Activated CD4-positive, alpha-beta memory T cell treated with anti-CD3 and anti-CD28 coated beads for 36 hours (primary cell): ENCODE measurements at regions of chr12 and their contacts with region 1.

Region 1: DNA sequence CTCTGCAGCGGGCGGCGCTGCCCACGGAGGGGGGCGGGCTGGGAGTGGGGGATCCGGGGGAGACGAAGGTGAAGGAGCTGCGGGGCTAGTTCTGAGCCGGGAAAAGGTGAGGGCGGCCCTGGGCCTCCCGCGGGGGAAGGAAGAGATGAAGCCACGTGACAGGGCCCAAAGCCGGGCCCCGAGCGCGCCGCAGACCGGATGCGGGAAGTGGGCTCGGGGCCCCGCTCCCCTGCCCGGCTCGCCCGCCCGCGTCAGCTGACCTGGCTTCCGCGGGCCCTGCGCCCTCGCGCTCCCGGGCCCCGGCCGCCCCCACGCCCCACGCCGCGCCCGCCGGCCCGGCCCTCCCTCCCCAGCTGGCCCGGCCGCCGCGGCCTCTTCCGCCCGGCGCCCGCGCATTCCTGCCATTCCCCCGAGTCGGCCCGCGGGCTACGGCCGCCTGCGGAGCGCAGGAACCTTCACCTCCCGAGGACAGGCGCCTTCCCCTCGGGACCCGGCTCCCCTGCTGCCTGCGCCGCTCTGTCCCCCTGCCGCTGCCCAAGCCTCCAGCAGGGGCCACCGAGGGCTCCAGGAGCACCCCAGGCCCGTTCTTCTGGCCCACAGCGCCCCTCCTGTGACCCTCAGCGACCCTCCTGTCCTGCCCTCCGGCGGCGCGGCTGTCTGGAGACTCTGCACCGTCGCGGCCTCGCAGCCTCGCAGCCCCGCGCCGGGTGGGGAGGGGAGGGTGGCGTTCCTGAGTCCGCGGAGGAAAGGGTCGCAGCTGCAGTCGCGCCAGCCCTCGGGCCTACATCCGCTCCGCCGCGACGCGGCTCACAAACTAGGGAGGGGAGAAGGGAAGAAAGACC is 20.4 kb downstream of the NINJ2 start:
- DNase-seq: peak; percentile 86
- H3K4me3 Mint-ChIP-seq: peak overlapping the region; percentile 74
- H3K27ac Mint-ChIP-seq: peak overlapping the region; percentile 96
- H3K4me1 Mint-ChIP-seq: peaks cover 57% of the 10 kb centered on the region
- H3K27me3 Mint-ChIP-seq: no peaks in the 10 kb centered on the region

Region 2: DNA sequence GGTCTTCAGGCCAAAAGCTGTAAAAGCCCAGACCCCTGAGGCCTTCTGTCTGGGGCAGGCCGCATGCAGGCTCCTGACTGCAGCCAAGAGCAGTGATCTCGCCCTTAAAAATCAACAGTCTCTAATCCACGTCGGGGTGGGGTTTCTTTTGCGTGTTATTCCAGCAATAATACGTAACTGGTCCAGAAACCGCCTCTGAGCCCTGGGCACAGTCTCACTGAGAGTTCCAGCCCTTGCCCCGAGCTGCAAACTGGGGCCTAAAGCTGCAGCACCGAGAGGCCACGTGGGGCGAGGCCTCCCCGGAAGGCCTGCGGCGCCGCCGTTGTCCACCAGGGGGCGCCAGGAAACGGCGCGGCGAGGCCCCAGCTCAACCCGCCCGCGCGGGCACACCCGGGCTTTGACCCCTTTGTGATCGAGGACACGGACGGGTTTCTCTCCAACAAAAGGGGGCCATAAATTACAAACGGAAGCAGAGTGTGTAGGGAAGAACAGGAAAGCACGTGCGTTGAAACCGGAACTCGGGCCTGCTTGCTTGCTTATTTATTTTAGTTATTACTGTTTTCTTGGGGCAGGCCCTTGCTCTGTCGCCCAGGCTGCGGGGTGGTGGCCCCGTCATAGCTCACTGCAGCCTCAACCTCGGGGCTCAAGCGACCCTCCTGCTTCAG is 66.8 kb before region 1 on chr12:
- CTCF ChIA-PET with region 1: interaction called, 13 read pairs
- POLR2A ChIA-PET with region 1: no interaction called
- intact Hi-C with region 1: loop called (anchors 2 kb)
- DNase-seq: peak; percentile 88
- H3K4me3 Mint-ChIP-seq: peak overlapping the region; percentile 51
- H3K27ac Mint-ChIP-seq: peak overlapping the region; percentile 45
- H3K4me1 Mint-ChIP-seq: peaks cover 34% of the 10 kb centered on the region
- H3K27me3 Mint-ChIP-seq: no peaks in the 10 kb centered on the region

Region 3: GRCh38 chr12:622416-622815 is 20.4 kb before region 1 on chr12:
- CTCF ChIA-PET with region 1: interaction called, 3 read pairs
- POLR2A ChIA-PET with region 1: no interaction called
- intact Hi-C with region 1: loop called (anchors 1 kb)
- DNase-seq: peak; percentile 40
- H3K4me3 Mint-ChIP-seq: peak overlapping the region; percentile 45
- H3K27ac Mint-ChIP-seq: peak overlapping the region; percentile 86
- H3K4me1 Mint-ChIP-seq: peaks cover 30% of the 10 kb centered on the region
- H3K27me3 Mint-ChIP-seq: no peaks in the 10 kb centered on the region

Region 4: DNA sequence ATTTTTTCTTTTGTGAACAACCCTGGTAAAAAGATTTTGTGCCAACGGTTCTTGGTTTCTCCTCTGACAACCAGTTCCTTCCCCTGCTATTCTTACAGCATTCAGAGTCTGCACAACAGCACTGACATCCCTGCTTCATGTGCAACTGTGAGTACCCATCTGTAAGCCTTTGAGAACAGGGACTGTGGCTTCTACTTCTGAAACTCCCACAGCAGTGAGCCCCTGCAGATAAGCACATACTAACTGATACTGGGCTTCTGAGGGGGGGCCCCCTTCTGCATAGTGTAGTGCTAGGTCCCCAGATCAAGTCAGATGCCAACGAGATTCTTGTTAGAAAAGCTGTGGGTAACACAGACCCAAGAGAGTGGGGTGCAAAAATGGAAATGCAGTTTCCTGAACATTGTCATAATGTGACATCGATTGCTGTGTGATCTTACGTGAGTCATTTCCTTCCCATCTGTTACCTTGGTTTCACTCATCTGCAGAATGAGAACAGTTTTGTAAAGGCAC is 31.5 kb after region 1 on chr12:
- CTCF ChIA-PET with region 1: interaction called, 6 read pairs
- POLR2A ChIA-PET with region 1: interaction called, 7 read pairs
- intact Hi-C with region 1: loop called (anchors 1 kb)
- DNase-seq: peak; percentile 90
- H3K4me3 Mint-ChIP-seq: peak overlapping the region; percentile 70
- H3K27ac Mint-ChIP-seq: peak overlapping the region; percentile 85
- H3K4me1 Mint-ChIP-seq: peaks cover 65% of the 10 kb centered on the region
- H3K27me3 Mint-ChIP-seq: peaks cover 8% of the 10 kb centered on the region

Region 5: DNA sequence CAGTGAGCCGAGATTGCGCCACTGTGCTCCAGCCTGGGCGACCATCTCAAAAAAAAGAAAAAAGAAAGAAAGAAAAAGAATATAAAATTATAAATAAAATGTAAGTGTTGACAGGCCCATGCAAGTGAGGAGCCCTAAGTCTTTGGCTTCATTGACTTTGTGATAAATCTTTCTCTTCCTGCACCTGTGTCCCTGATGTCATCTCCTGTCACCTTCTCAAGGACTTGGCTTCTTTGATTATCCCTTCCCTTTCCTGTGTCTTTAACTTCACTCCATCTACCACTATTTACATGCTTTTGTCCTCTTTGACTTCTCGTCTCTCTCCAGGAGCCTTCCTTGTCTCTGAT is 75.9 kb after region 1 on chr12:
- CTCF ChIA-PET with region 1: no interaction called
- POLR2A ChIA-PET with region 1: no interaction called
- intact Hi-C with region 1: no loop called
- DNase-seq: no peak
- H3K4me3 Mint-ChIP-seq: peak overlapping the region; percentile 9
- H3K27ac Mint-ChIP-seq: no peak overlapping the region
- H3K4me1 Mint-ChIP-seq: peaks cover 41% of the 10 kb centered on the region
- H3K27me3 Mint-ChIP-seq: no peaks in the 10 kb centered on the region

Region 6: GRCh38 chr12:795305-795704 is 152.5 kb after region 1 on chr12:
- CTCF ChIA-PET with region 1: no interaction called
- POLR2A ChIA-PET with region 1: no interaction called
- intact Hi-C with region 1: loop called (anchors 1 kb)
- DNase-seq: peak; percentile 85
- H3K4me3 Mint-ChIP-seq: peak overlapping the region; percentile 35
- H3K27ac Mint-ChIP-seq: peak overlapping the region; percentile 79
- H3K4me1 Mint-ChIP-seq: peaks cover 81% of the 10 kb centered on the region
- H3K27me3 Mint-ChIP-seq: no peaks in the 10 kb centered on the region